SK-N-SH (cell line): ENCODE measurements at regions of chr14 and their contacts with region 1.

Region 1: DNA sequence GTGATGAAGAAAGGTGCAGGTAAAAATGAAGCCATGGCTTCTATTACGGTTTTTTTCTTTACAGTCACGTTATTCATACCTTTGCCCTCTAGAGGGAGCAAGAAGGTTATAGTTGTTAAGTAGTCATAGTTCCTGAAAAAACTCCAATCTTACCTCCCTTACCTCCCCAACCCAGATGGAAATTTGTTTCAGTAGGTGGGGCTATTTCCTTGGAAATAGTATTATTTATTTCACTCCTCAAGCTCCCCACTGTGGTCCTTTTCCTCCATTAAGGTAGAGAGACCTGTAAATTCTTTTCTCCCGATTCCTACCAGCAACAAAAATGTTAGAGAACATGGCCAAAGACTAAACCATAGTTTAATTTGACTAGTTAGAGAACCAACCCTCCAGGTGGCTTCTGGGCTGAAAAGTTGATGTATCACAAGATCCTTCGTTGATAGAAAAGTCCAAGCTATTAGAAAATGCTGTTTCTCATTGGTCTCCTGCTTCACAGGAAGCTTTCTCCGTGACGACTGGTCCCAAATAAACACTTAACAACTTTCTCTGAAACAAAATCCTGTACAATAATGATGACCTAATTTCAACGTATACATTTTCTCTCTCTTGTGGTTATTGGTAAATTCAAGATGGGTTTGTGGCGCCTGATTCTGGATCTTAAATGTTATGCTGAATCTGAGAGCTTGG is 43.5 kb downstream of the TMX1 start:
- DNase-seq: peak; percentile 68
- H3K4me3 ChIP-seq: no peak overlapping the region
- H3K27ac ChIP-seq: peak overlapping the region; percentile 64 to 80
- H3K4me1 ChIP-seq: peaks cover 4% of the 10 kb centered on the region in 2 experiments; a peak in 3 of 4 replicates
- H3K27me3 ChIP-seq: no peaks in the 10 kb centered on the region
- CTCF ChIP-seq: peak; percentile 96
- EP300 ChIP-seq: no peak
- RAD21 ChIP-seq: peak; percentile 99

Region 2: GRCh38 chr14:51365241-51365965 is 81.9 kb after region 1 on chr14:
- CTCF ChIA-PET with region 1: no interaction called
- POLR2A ChIA-PET with region 1: no interaction called
- DNase-seq: no peak
- H3K4me3 ChIP-seq: no peak overlapping the region
- H3K27ac ChIP-seq: no peak overlapping the region
- H3K4me1 ChIP-seq: peaks cover 0 to 2% of the 10 kb centered on the region in 2 experiments; a peak in 3 of 4 replicates
- H3K27me3 ChIP-seq: no peaks in the 10 kb centered on the region
- CTCF ChIP-seq: no peak
- EP300 ChIP-seq: no peak
- RAD21 ChIP-seq: no peak

Region 3: GRCh38 chr14:51444353-51445000 is 160.9 kb after region 1 on chr14:
- CTCF ChIA-PET with region 1: interaction called, 11 read pairs
- POLR2A ChIA-PET with region 1: no interaction called
- DNase-seq: no peak
- H3K4me3 ChIP-seq: no peak overlapping the region
- H3K27ac ChIP-seq: peak overlapping the region; percentile 11 to 99; a peak in 3 of 4 replicates
- H3K4me1 ChIP-seq: peaks cover 21 to 37% of the 10 kb centered on the region in 2 experiments
- H3K27me3 ChIP-seq: no peaks in the 10 kb centered on the region
- CTCF ChIP-seq: no peak
- EP300 ChIP-seq: no peak
- RAD21 ChIP-seq: no peak

Region 4: GRCh38 chr14:51548187-51548586 is 264.6 kb after region 1 on chr14:
- CTCF ChIA-PET with region 1: interaction called, 11 read pairs
- POLR2A ChIA-PET with region 1: no interaction called
- DNase-seq: no peak
- H3K4me3 ChIP-seq: peak overlapping the region; percentile 3 to 9; a peak in 2 of 4 replicates
- H3K27ac ChIP-seq: peak overlapping the region; percentile 94 to 100
- H3K4me1 ChIP-seq: peaks cover 27 to 36% of the 10 kb centered on the region in 2 experiments
- H3K27me3 ChIP-seq: no peaks in the 10 kb centered on the region
- CTCF ChIP-seq: no peak
- EP300 ChIP-seq: peak; percentile 55 to 59; a peak in 3 of 4 replicates
- RAD21 ChIP-seq: no peak

Region 5: DNA sequence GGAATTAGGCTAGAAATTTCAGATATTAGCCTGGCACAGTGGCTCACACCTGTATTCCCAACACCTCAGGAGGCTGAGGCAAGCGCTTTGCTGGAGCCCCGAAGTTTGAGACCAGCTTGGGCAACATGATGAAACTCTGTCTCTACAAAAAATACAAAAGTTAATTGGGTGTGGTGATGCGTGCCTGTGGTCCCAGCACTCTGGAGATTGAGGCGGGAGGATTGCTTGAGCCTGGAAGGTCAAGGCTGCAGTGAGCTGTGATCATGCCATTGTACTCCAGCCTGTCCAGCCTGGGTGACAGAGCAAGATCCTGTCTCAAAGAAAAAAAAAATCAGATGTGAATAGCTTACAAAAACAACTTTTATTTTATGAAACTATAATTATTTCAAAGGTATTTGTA is 383.3 kb after region 1 on chr14:
- CTCF ChIA-PET with region 1: interaction called, 14 read pairs
- POLR2A ChIA-PET with region 1: no interaction called
- DNase-seq: no peak
- H3K4me3 ChIP-seq: no peak overlapping the region
- H3K27ac ChIP-seq: peak overlapping the region in 1 of 2 experiments; percentile 37; a peak in 1 of 4 replicates
- H3K4me1 ChIP-seq: peaks cover 0 to 7% of the 10 kb centered on the region in 2 experiments; a peak in 3 of 4 replicates
- H3K27me3 ChIP-seq: no peaks in the 10 kb centered on the region
- CTCF ChIP-seq: no peak
- EP300 ChIP-seq: no peak
- RAD21 ChIP-seq: no peak

Region 6: DNA sequence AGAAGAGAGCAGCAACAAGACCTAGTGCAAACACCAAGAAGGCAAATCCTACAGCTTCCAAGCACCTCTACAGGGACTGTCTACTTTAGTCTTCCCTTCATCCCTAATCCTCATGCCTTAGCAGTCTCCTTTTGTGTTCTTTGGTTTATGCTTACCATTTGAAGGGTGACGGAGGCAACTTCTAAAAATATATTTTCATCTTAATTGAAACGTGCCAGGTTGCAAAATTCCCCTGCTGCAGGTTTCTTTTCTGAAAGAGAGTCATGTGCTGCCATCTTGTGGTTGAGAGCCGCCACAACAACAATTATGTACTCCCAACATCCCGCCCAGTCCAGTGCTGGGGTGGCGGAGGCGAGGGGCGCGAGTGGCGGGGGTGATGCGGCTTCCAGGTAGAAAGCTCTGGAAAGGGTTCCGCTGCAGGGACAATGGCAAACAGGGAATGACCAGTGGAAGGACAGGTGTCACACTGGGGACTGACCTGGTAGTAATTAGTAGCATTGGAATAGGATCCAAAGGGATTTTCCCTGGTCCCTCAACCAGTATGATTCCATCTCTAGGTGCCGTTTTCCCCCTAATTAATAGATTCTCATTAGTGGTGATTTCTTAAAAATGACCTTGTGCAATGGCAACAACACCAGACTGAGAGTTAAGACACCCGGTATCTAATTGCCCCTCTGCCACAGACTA is 496.6 kb after region 1 on chr14:
- CTCF ChIA-PET with region 1: interaction called, 460 read pairs
- POLR2A ChIA-PET with region 1: no interaction called
- DNase-seq: peak; percentile 80
- H3K4me3 ChIP-seq: peak overlapping the region; percentile 33 to 52; a peak in 3 of 4 replicates
- H3K27ac ChIP-seq: no peak overlapping the region; a peak in 1 of 4 replicates
- H3K4me1 ChIP-seq: peaks cover 0 to 7% of the 10 kb centered on the region in 2 experiments; a peak in 2 of 4 replicates
- H3K27me3 ChIP-seq: no peaks in the 10 kb centered on the region
- CTCF ChIP-seq: peak; percentile 87
- EP300 ChIP-seq: no peak
- RAD21 ChIP-seq: peak; percentile 86